Posterior cingulate gyrus (tissue), 11 donors: ENCODE measurements at regions of chr11 and their contacts with region 1.

Region 1: DNA sequence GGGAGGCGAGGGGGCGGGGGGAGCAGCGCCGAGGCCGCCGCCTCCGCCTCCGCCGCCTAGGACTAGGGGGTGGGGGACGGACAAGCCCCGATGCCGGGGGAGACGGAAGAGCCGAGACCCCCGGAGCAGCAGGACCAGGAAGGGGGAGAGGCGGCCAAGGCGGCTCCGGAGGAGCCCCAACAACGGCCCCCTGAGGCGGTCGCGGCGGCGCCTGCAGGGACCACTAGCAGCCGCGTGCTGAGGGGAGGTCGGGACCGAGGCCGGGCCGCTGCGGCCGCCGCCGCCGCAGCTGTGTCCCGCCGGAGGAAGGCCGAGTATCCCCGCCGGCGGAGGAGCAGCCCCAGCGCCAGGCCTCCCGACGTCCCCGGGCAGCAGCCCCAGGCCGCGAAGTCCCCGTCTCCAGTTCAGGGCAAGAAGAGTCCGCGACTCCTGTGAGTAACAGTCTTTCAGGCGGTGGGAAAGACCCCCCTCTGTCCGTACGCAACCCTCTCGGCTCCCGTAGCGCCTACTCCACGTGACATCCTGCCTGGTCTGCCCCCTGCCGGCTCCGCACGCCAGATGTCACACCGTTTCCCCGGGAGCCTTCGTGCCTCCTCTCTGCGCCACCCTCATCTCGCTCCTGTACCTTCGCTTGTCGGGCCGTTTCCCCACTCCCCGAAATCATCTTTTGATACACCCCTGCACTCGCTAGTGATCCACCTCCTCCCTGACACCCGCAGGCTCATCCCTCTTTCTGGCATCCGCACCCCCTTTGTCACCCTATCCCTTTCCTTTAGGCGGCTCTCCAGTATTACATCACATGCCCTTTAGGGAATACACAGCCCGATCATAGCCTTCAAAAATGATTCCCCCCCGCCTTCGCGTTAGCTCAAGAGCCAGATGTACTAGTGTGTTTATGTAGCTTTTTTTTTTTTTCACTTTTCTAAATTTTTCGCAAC is 598 bp downstream of the ZFP91 start:
- DNase-seq: peak; percentile 88 to 98 (median 93)

Region 2: GRCh38 chr11:58616594-58616993 is 37.1 kb after region 1 on chr11:
- intact Hi-C with region 1: loop called (anchors 5 kb)
- DNase-seq: no peak

Region 3: DNA sequence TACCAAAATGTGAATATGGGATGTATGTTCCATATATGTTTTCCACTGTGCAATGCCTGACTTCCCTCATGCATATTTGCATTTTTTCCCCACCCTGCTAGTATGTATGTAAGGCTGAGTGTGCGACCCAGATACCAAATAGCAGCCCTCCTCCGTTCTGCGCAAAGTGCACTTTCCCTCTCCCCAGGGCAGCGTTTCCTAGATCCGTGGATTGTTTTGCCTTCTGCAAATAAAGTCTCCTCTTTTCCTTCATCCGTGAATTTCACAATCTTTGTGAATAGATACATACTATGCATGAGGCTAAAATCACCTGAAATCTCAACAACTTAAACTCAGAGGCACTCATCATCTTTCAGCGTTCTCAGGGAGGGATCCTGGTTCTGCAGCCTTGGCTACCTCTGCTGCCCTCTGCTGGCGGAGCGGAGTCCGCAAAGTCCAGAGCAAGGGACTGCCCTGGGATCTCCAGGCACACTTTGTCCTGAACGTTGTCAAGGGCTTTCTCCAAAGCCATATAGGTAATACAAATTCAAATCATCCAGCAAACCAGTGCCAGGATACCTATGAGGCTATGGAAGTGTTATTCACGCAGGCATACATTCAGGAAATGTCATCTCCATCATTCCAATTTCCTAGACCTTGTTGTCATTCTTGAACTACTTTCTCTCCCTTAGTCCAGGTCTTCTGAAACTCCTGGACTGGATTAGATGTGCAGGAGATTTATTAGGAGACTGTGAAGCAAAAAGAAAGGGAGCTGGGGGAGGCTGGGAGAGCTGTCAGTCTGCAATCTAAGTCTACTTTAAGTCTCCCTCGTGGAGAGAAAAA is 96.1 kb after region 1 on chr11:
- intact Hi-C with region 1: loop called (anchors 2 kb)
- DNase-seq: peak; percentile 47 to 96 (median 83)